GM12878 (cell line): ENCODE measurements at regions of chr2 and their contacts with region 1.

Region 1: GRCh38 chr2:14303366-14304115 is 329.0 kb upstream of the LRATD1 start:
- DNase-seq: peak; percentile 45
- ATAC-seq: peak; percentile 91
- H3K4me3 ChIP-seq: no peak overlapping the region
- H3K27ac ChIP-seq: peak overlapping the region; percentile 65
- H3K4me1 ChIP-seq: peaks cover 10% of the 10 kb centered on the region; the same call in 1 of the 2 replicates
- H3K27me3 ChIP-seq: no peaks in the 10 kb centered on the region
- CTCF ChIP-seq: no peak
- EP300 ChIP-seq: peak; percentile 88 to 97
- POLR2A ChIP-seq: no peak
- RAD21 ChIP-seq: no peak

Region 2: DNA sequence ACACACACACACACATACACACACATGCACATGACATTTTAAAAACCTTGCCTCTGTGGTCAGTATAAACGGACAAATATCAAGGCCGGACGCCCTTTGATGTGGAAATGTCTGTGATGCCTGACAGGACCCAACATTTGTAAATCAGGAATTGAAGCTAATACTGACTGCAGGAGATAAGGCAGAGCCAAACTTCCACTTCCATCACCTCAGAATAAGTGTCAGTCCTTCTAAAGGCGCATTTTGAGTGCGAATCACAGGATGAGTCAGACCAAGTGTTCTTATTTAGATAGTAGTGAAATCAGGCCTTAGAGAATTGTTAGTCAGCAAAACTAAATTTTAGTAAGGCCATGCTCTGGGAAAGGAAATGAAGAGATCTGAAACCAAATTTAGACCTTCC is 117.3 kb after region 1 on chr2:
- CTCF ChIA-PET with region 1: interaction called, 7 read pairs
- POLR2A ChIA-PET with region 1: interaction called, 3 read pairs
- RAD21 ChIA-PET with region 1: interaction called, 5 read pairs
- SMC1A ChIA-PET with region 1: interaction called, 29 read pairs
- in situ Hi-C with region 1: no loop called
- intact Hi-C with region 1: loop called (anchors 5 kb)
- DNase-seq: no peak
- ATAC-seq: peak; percentile 66
- H3K4me3 ChIP-seq: no peak overlapping the region
- H3K27ac ChIP-seq: no peak overlapping the region
- H3K4me1 ChIP-seq: no peaks in the 10 kb centered on the region
- H3K27me3 ChIP-seq: no peaks in the 10 kb centered on the region
- CTCF ChIP-seq: no peak
- EP300 ChIP-seq: no peak
- POLR2A ChIP-seq: no peak
- RAD21 ChIP-seq: no peak

Region 3: DNA sequence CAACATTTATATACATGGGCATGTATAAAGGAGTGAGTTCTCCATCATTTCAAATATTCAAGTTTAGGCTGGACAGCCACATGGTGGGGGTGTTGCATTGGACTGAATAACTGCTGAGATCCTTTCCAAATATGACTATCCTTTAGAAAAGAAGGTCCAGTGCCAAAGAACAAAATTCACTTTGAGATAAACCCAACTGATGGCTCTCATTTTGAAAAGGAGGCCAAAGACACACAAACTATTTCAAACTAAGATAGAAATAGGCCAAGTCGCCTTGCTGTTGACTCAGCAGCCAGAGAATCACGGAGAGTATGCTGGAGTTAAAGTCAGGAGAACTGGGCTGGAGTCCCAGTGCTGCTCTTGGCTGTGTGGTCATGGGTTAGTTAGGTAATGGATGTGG is 124.5 kb after region 1 on chr2:
- CTCF ChIA-PET with region 1: interaction called, 5 read pairs
- POLR2A ChIA-PET with region 1: no interaction called
- RAD21 ChIA-PET with region 1: interaction called, 5 read pairs
- SMC1A ChIA-PET with region 1: interaction called, 29 read pairs
- in situ Hi-C with region 1: no loop called
- intact Hi-C with region 1: loop called (anchors 5 kb)
- DNase-seq: no peak
- ATAC-seq: no peak
- H3K4me3 ChIP-seq: no peak overlapping the region
- H3K27ac ChIP-seq: no peak overlapping the region
- H3K4me1 ChIP-seq: no peaks in the 10 kb centered on the region
- H3K27me3 ChIP-seq: no peaks in the 10 kb centered on the region
- CTCF ChIP-seq: peak in 1 of 3 experiments; percentile 19; a peak in 1 of 6 replicates
- EP300 ChIP-seq: no peak
- POLR2A ChIP-seq: no peak
- RAD21 ChIP-seq: peak; percentile 27; the same call in 1 of the 2 replicates

Region 4: DNA sequence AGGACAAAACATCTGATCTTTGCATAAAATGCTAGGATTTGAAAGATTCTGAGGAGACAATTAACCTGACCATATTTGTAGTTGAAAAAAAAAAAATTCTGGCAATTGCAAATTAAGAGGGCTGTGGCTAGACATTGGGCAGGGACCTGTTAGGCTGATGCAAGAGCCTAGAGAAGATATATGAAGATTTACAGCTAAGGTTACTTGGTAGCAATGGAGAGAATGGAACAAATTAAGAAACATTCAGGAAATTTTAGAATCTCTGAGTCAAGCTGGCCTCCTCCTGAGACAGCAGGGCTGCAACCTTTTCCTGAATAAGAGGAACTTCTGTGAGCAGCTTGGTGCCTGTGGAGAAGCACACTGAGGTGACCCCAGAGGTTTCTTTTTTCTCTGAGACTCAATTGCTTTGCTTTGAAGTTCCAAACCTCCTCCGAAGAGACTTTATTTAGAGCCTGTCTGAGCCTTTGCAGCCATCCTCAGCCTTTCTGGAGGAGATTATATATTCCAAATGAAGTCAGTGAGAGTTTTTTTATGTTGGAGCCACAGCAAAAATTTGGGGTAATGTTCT is 210.4 kb after region 1 on chr2:
- CTCF ChIA-PET with region 1: no interaction called
- POLR2A ChIA-PET with region 1: no interaction called
- RAD21 ChIA-PET with region 1: no interaction called
- SMC1A ChIA-PET with region 1: no interaction called
- in situ Hi-C with region 1: no loop called
- intact Hi-C with region 1: no loop called
- DNase-seq: no peak
- ATAC-seq: no peak
- H3K4me3 ChIP-seq: no peak overlapping the region
- H3K27ac ChIP-seq: no peak overlapping the region
- H3K4me1 ChIP-seq: no peaks in the 10 kb centered on the region
- H3K27me3 ChIP-seq: no peaks in the 10 kb centered on the region
- CTCF ChIP-seq: no peak
- EP300 ChIP-seq: no peak
- POLR2A ChIP-seq: no peak
- RAD21 ChIP-seq: no peak